ENCODE measurements at regions of chr15 and their contacts with region 1.

Region 1: GRCh38 chr15:67542420-67543347 is at the start of gene MAP2K5:
- DNase-seq: peak; percentile 90 to 95 (median 92)
- ATAC-seq: peak; percentile 79 to 97 (median 95)
- H3K4me3 ChIP-seq: peak within 1 kb of the TSS; percentile 45 to 98 (median 88)
- H3K27ac ChIP-seq: peak within 1 kb of the TSS; percentile 63 to 95 (median 88)
- H3K4me1 ChIP-seq: peaks cover 0 to 32% (median 16%) of the 10 kb centered on the region in 12 donors
- H3K27me3 ChIP-seq: no peaks in the 10 kb centered on the region
- CTCF ChIP-seq: no peak
- POLR2A ChIP-seq: peak; percentile 17 to 79
- total RNA-seq, gene MAP2K5: 9.9 to 32.0 (median 22.7) TPM

Region 2: GRCh38 chr15:67472957-67473356 is 69.7 kb before region 1 on chr15:
- intact Hi-C with region 1: no loop called
- DNase-seq: no peak
- ATAC-seq: no peak
- H3K4me3 ChIP-seq: no peak overlapping the region
- H3K27ac ChIP-seq: no peak overlapping the region
- H3K4me1 ChIP-seq: no peaks in the 10 kb centered on the region
- H3K27me3 ChIP-seq: no peaks in the 10 kb centered on the region
- CTCF ChIP-seq: no peak
- POLR2A ChIP-seq: no peak

Region 3: GRCh38 chr15:67521029-67521811 is 21.5 kb before region 1 on chr15 and contains the start of gene C15orf61:
- intact Hi-C with region 1: loop called in 3 of 10 experiments (anchors 1 to 2 kb)
- DNase-seq: peak; percentile 87 to 92 (median 89)
- ATAC-seq: peak; percentile 76 to 95 (median 90)
- H3K4me3 ChIP-seq: peak within 1 kb of the TSS; percentile 54 to 95 (median 74)
- H3K27ac ChIP-seq: peak within 1 kb of the TSS; percentile 92 to 99 (median 97)
- H3K4me1 ChIP-seq: peaks cover 0 to 37% (median 25%) of the 10 kb centered on the region in 12 donors
- H3K27me3 ChIP-seq: no peaks in the 10 kb centered on the region
- CTCF ChIP-seq: peak in 3 of 12 donors; percentile 10 to 26 (median 11)
- POLR2A ChIP-seq: peak in 1 of 2 donors; percentile 77
- total RNA-seq, gene C15orf61: 5.0 to 11.7 (median 10.0) TPM

Region 4: DNA sequence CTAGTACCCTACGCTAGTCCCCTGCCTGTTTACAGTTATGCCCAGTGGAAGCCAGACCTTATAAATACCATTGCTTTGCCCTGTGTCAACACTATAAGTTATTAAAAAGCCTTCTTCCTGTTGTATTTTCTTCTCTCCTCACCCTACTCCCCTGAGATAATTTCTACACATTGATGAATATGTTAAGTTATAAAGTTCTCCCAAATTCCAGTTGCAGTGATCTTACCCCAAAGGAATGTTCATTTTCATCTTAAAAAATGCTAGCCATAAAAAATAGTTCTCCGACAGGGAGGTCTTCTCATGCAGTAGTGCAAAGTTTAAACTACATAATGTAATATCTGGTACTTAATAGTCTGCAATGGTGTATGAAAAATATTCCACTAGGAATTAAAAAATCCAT is 58.4 kb after region 1 on chr15:
- intact Hi-C with region 1: no loop called
- DNase-seq: no peak
- ATAC-seq: no peak
- H3K4me3 ChIP-seq: no peak overlapping the region
- H3K27ac ChIP-seq: no peak overlapping the region
- H3K4me1 ChIP-seq: no peaks in the 10 kb centered on the region
- H3K27me3 ChIP-seq: no peaks in the 10 kb centered on the region
- CTCF ChIP-seq: no peak
- POLR2A ChIP-seq: no peak